ENCODE measurements at regions of chr16 and their contacts with region 1.

Region 1: GRCh38 chr16:31196324-31197088 is 6.1 kb downstream of the PYCARD start:
- DNase-seq: no peak
- ATAC-seq: no peak
- H3K4me3 ChIP-seq: no peak overlapping the region
- H3K27ac ChIP-seq: no peak overlapping the region
- H3K4me1 ChIP-seq: peaks cover 0 to 34% (median 3%) of the 10 kb centered on the region in 12 donors
- H3K27me3 ChIP-seq: no peaks in the 10 kb centered on the region
- CTCF ChIP-seq: no peak
- POLR2A ChIP-seq: no peak

Region 2: GRCh38 chr16:31179747-31180459 is 16.6 kb before region 1 on chr16 and contains the start of gene FUS:
- intact Hi-C with region 1: loop called in 1 of 10 experiments (anchors 2 kb)
- DNase-seq: peak; percentile 91 to 96 (median 93)
- ATAC-seq: peak; percentile 84 to 90 (median 88)
- H3K4me3 ChIP-seq: peak within 1 kb of the TSS; percentile 60 to 99 (median 86)
- H3K27ac ChIP-seq: peak within 1 kb of the TSS; percentile 87 to 99 (median 94)
- H3K4me1 ChIP-seq: peaks cover 0 to 47% (median 37%) of the 10 kb centered on the region in 12 donors
- H3K27me3 ChIP-seq: peaks cover 0 to 5% (median 0%) of the 10 kb centered on the region in 9 donors
- CTCF ChIP-seq: peak in 1 of 12 donors; percentile 8
- POLR2A ChIP-seq: peak; percentile 67 to 96
- total RNA-seq, gene FUS: 20.3 to 213 (median 127) TPM

Region 3: DNA sequence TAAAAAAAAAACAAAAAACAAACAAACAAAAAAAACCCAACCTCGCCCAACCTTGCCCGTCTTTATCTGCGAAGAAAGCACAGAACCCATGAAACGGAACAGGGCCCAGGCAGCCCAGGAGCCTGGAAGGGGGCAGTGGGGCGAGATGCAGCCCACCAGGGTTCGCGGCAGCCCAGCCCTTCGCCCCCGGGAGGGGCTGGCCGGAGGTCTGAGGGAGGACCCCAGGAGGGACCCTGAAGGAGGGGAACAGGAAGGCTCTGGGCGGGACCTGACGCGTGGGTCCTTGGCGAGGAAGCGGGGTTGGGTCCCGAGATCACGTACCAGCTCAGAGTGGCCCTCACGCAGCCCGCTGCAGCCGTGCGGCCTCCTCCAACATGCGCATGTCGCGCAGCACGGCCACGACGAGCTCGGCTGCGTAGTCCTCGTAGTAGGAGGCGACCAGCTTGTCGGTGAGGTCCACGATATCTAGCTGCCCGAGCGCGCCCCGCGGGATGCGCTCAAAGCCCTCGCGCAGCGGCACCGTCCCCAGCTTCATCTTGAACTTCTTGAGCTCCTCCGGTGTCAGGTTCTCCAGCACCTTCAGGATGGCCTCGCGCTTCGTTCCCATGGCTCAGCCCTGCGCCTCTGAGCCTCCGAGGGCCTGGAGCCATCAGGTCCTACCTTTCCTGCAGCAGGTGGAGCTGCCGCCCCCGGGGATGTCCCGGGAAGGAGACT is 20.1 kb after region 1 on chr16 and contains the start of gene PYDC1:
- intact Hi-C with region 1: no loop called
- DNase-seq: no peak
- ATAC-seq: no peak
- H3K4me3 ChIP-seq: peak within 1 kb of the TSS in 11 of 12 donors; percentile 5 to 65 (median 53)
- H3K27ac ChIP-seq: no peak within 1 kb of the TSS
- H3K4me1 ChIP-seq: peaks cover 11 to 35% (median 25%) of the 10 kb centered on the region in 12 donors
- H3K27me3 ChIP-seq: peaks cover 4 to 48% (median 24%) of the 10 kb centered on the region in 9 donors
- CTCF ChIP-seq: no peak
- POLR2A ChIP-seq: no peak
- total RNA-seq, gene PYDC1: not detected

Region 4: DNA sequence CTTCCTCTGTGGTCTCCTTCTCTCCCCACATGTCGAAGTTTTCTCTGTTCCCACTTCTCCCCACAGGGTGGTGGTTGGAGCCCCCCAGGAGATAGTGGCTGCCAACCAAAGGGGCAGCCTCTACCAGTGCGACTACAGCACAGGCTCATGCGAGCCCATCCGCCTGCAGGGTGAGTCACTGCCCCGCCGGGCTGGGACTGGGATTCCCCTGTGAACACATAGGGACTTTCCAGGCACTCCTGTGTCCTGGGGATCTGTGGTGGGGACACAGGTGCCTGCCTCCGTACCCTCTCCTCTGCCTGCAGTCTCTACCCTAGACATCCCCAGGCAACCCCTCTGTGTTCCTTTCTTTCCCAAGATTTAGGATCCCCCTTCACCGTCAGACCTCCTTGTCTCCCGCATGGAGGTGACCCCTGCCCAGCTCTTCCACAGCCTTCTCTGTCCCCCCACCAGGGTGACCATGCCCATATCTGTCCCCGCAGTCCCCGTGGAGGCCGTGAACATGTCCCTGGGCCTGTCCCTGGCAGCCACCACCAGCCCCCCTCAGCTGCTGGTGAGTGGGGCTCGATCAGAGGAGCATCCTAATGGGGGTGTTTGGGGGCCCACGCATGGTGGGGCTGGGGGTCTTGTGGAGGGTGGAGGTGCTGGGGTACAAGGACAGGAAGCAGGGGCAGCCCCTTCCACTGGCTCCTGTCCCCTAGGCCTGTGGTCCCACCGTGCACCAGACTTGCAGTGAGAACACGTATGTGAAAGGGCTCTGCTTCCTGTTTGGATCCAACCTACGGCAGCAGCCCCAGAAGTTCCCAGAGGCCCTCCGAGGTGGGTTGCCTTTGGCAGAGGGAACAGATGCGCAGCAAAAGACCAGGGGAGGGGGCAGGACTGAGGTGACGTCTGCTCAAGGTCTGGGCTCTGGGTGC is 69.1 kb after region 1 on chr16:
- intact Hi-C with region 1: no loop called
- DNase-seq: no peak
- ATAC-seq: peak in 1 of 4 donors; percentile 48
- H3K4me3 ChIP-seq: no peak overlapping the region
- H3K27ac ChIP-seq: no peak overlapping the region
- H3K4me1 ChIP-seq: peaks cover 0 to 48% (median 0%) of the 10 kb centered on the region in 12 donors
- H3K27me3 ChIP-seq: peaks cover 0 to 17% (median 0%) of the 10 kb centered on the region in 9 donors
- CTCF ChIP-seq: no peak
- POLR2A ChIP-seq: no peak

Region 5: DNA sequence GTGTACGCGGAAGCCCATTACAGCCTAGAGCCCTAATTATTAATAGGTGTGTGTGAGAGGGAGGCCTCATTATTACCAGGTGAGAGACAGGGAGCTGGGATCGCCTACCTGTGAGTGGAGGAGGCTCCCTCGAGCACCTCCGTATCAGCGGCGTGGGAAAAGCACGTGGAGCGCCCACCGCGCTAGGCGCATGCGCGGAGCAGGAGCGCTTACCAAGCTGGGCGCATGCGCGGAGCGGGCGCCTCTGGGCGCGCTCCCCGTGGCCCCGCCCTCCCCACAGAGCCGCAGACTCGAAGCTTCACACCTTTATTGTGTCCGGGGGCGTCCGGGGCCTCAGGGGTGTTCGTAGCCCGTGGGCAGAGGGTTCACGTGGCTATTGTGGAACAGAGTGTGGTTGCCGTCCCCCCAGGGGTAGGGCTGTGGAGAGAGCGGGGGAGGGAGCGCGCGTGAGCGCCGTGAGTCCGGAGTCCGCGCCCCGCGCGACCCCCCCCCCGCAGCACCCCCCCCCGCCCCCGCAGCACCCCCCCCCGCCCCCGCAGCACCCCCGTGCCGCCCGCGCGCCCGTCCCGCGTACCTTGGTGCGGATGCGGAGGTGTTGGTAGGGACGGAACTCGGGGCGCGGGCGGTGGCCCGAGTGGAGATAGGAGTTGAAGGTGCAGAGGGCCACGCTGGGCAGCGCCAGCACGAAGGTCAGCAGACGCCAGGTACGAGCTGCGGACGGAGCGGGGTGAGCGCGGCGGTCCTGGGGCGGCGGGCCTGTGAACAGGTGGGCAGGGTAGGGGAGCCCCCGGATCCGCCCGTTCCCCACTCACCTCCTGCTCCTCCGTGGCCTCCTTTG is 231.2 kb after region 1 on chr16:
- intact Hi-C with region 1: loop called in 1 of 10 experiments (anchors 10 kb)
- DNase-seq: peak; percentile 54 to 87 (median 74)
- ATAC-seq: peak in 3 of 4 donors; percentile 25 to 37 (median 28)
- H3K4me3 ChIP-seq: peak overlapping the region; percentile 25 to 72 (median 58)
- H3K27ac ChIP-seq: peak overlapping the region; percentile 86 to 100 (median 95)
- H3K4me1 ChIP-seq: peaks cover 0 to 50% (median 13%) of the 10 kb centered on the region in 12 donors
- H3K27me3 ChIP-seq: no peaks in the 10 kb centered on the region
- CTCF ChIP-seq: no peak
- POLR2A ChIP-seq: no peak

Measured in heart left ventricle (tissue), 16 donors.